ENCODE measurements at regions of chr6 and their contacts with region 1.

Region 1: DNA sequence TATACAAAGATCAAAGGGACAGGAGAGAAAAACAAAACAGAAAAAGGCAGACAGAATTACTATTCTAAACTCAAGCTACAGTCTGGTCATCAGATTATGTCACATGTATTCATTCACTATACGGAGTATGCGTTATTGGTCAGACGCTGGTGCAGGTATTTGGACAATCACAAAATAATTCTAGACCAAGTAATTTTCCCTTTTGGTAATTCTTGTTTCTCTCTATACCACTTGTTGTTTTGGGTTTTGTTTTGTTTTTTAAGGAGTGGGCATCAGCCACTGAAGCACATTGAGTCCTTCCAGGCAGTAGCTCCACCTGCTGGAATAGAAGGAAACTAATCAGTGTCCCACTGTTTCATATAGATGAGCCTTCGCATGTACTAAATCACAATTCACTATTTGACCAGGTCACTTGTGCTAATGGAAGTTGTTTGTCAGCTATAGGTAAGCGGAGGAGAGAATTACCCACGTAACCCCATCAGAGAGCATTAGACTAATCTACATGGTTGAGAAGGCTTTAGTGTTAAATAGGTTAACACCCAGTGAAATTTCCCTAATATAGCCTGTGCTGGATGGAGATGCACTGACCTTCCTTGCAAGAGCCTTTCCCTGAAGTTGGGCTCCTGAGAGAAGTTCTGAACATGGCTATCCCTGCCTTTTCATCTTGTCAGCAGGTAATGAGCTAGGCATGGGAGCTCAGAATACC is 77.9 kb downstream of the TNFAIP3 start:
- DNase-seq: no peak
- ATAC-seq: peak; percentile 85 to 87
- H3K4me3 ChIP-seq: no peak overlapping the region
- H3K27ac ChIP-seq: no peak overlapping the region
- H3K4me1 ChIP-seq: no peaks in the 10 kb centered on the region
- H3K27me3 ChIP-seq: no peaks in the 10 kb centered on the region

Region 2: DNA sequence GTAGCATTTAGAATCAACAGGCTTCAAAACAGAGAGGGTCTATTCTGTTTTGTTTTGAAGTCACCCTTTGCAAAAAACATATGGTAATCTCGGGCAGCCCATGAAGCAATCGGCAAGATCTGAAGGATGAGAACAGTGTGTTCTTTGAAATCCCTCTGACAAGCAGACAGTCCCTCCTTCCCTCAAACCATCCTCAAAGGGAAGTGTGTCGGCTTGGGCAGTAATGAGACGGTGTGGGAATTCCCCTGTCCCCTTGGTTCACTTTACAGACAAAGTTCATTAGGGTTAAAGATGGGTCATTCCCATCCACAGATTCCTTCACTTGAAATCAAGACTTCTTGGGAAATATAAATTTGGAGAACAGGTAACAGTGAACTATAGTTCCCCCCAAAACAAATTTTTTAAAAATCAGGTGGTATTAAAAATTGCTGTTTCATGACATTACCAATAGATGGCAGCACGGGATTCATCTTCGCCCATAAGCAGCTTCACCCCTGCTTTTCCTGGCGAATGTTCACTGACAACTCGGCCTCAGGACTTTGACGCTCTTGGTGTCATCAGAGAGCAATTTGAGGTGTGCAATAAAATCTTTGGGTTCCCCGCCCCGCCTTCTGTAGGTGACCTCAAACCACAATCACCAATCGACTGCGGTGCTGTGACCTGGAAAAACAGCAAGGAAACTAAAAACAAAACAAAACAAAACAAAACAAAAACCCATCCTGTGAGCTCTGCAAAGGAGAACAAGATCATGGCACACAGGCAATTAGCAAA is 237.2 kb before region 1 on chr6:
- intact Hi-C with region 1: loop called (anchors 2 to 5 kb)
- DNase-seq: peak; percentile 44 to 77 (median 61)
- ATAC-seq: peak; percentile 64 to 71
- H3K4me3 ChIP-seq: no peak overlapping the region
- H3K27ac ChIP-seq: no peak overlapping the region
- H3K4me1 ChIP-seq: no peaks in the 10 kb centered on the region
- H3K27me3 ChIP-seq: no peaks in the 10 kb centered on the region

Region 3: DNA sequence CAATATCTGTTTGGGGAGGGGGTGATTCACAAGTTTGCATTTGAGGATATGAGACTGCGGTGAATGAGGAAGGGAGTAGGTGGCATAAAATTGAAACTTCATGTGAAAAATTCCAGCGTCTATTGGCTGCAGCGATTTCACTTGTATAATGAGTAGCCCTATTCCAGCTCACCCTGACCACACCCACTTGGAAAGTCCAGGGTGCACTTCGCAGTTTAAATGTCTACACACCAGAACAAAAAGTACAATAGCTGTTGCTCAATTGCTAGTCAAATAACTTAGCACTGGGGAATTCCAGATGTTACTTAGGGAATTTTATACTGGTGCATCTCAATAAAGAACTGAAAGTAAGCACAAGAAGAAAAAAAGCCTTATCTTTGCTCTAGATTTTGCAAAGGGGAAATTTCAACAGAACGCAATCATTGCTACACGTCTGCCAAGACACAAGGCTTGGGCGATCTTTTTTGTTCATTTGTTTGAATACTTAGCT is 71.6 kb before region 1 on chr6:
- intact Hi-C with region 1: loop called in 1 of 4 experiments (anchors 5 kb)
- DNase-seq: peak; percentile 63 to 88 (median 66)
- ATAC-seq: peak; percentile 94 to 96
- H3K4me3 ChIP-seq: peak overlapping the region; percentile 9
- H3K27ac ChIP-seq: no peak overlapping the region
- H3K4me1 ChIP-seq: peaks cover 7% of the 10 kb centered on the region
- H3K27me3 ChIP-seq: no peaks in the 10 kb centered on the region

Region 4: GRCh38 chr6:138012682-138013081 is 67.7 kb after region 1 on chr6:
- intact Hi-C with region 1: no loop called
- DNase-seq: no peak
- ATAC-seq: no peak
- H3K4me3 ChIP-seq: no peak overlapping the region
- H3K27ac ChIP-seq: no peak overlapping the region
- H3K4me1 ChIP-seq: no peaks in the 10 kb centered on the region
- H3K27me3 ChIP-seq: no peaks in the 10 kb centered on the region